ENCODE measurements at regions of chr5 and their contacts with region 1.

Region 1: GRCh38 chr5:56211298-56211865 is 21.7 kb downstream of the ANKRD55 start:
- DNase-seq: peak; percentile 84
- ATAC-seq: peak; percentile 67
- H3K4me3 ChIP-seq: no peak overlapping the region
- H3K27ac ChIP-seq: 0 out of 2 replicates have a peak overlapping the region, but pooled peaks have one; percentile 11
- H3K4me1 ChIP-seq: peaks cover 12% of the 10 kb centered on the region
- H3K27me3 ChIP-seq: no peaks in the 10 kb centered on the region
- CTCF ChIP-seq: no peak
- POLR2A ChIP-seq: no peak
- RAD21 ChIP-seq: no peak

Region 2: DNA sequence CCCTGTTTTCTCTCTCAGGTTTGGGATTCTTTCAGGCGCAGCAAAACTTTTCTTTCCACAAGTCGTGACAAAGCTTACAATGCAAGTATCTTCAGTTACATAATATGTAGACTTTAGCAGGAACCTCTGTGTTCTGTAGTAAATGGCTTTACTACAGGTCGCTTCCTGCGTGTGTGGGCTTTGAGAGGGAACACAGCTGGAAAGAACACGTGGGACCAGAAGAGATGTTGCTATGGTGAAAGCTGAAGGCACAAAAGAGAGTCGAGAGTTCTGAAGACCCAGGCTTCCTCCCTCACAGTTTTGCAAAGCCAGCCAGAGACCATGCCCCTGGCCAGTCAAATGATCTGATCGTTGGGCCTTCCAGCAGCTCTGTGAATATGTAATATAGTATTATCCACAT is 17.7 kb after region 1 on chr5:
- CTCF ChIA-PET with region 1: no interaction called
- POLR2A ChIA-PET with region 1: no interaction called
- dilution Hi-C with region 1: no loop called
- in situ Hi-C with region 1: no loop called
- intact Hi-C with region 1: no loop called
- DNase-seq: no peak
- ATAC-seq: no peak
- H3K4me3 ChIP-seq: no peak overlapping the region
- H3K27ac ChIP-seq: no peak overlapping the region
- H3K4me1 ChIP-seq: peaks cover 2% of the 10 kb centered on the region; the same call in 1 of the 2 replicates
- H3K27me3 ChIP-seq: no peaks in the 10 kb centered on the region
- CTCF ChIP-seq: no peak
- POLR2A ChIP-seq: no peak
- RAD21 ChIP-seq: no peak

Region 3: GRCh38 chr5:56259002-56259511 is 47.7 kb after region 1 on chr5:
- CTCF ChIA-PET with region 1: no interaction called
- POLR2A ChIA-PET with region 1: no interaction called
- dilution Hi-C with region 1: no loop called
- in situ Hi-C with region 1: no loop called
- intact Hi-C with region 1: loop called (anchors 5 kb)
- DNase-seq: peak; percentile 97
- ATAC-seq: peak; percentile 96
- H3K4me3 ChIP-seq: peak overlapping the region; percentile 17; the same call in 1 of the 2 replicates
- H3K27ac ChIP-seq: peak overlapping the region; percentile 91
- H3K4me1 ChIP-seq: peaks cover 12% of the 10 kb centered on the region
- H3K27me3 ChIP-seq: no peaks in the 10 kb centered on the region
- CTCF ChIP-seq: no peak
- POLR2A ChIP-seq: no peak
- RAD21 ChIP-seq: no peak

Region 4: DNA sequence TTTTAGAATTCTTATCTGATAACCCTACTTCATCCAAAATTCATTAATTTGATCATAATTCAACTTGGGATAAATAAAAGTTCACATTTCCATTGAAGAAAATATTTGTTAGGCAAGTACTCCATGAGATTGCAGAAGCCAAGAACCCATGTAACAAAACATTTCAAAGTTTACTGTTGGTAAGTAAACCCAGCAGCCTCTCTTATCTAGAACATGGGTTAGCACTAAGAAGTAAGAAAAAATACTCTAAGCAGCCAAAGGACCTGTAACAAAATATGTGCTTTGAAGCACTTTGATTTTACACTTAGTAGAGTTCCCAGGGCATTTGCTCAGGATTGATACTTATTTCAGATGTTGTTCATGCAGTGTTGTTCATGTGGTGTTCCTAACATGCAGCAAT is 612.6 kb after region 1 on chr5:
- CTCF ChIA-PET with region 1: no interaction called
- POLR2A ChIA-PET with region 1: interaction called, 13 read pairs
- dilution Hi-C with region 1: no loop called
- in situ Hi-C with region 1: no loop called
- intact Hi-C with region 1: no loop called
- DNase-seq: no peak
- ATAC-seq: no peak
- H3K4me3 ChIP-seq: no peak overlapping the region
- H3K27ac ChIP-seq: no peak overlapping the region
- H3K4me1 ChIP-seq: peaks cover 19% of the 10 kb centered on the region
- H3K27me3 ChIP-seq: no peaks in the 10 kb centered on the region
- CTCF ChIP-seq: no peak
- POLR2A ChIP-seq: no peak
- RAD21 ChIP-seq: no peak

Measured in IMR-90 (cell line).